IMR-90 (cell line): ENCODE measurements at regions of chr5 and their contacts with region 1.

Region 1: DNA sequence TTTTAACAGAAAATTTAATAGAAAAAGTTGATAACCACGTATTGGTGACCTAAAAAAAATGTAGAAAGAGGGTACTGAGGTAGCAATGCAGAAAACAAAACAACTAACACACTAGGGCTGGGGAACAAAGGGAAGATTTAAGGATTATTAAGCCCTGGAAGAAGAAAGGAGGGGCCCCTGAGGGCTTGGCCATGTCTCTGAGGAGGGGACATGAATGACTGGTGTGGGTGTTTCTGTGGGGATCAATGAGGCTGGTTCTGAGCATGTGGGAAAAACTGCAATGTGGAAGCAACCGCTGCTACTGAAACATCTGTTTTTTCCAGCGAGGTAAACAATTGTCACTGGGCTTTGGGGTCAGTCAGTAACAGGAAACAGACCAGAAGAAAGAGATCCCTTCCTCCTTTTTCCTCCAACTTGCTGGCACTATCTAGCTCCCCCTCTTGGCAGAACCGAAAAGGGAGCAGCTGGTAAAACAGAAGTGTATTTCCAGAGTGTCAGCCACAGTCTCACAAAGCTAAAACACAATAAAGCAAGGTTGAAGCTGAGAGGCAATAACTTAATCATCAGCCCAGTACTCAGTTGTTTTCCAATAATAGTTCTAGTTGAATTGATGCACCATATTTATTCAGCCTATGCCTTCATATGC is 48.3 kb downstream of the ATPSCKMT start:
- DNase-seq: peak; percentile 7
- ATAC-seq: no peak
- H3K4me3 ChIP-seq: no peak overlapping the region
- H3K27ac ChIP-seq: no peak overlapping the region
- H3K4me1 ChIP-seq: 0 out of 2 replicates have a peak, but pooled peaks cover 2% of the 10 kb centered on the region
- H3K27me3 ChIP-seq: no peaks in the 10 kb centered on the region
- CTCF ChIP-seq: peak; percentile 30; the same call in 1 of the 2 replicates
- POLR2A ChIP-seq: no peak
- RAD21 ChIP-seq: no peak

Region 2: DNA sequence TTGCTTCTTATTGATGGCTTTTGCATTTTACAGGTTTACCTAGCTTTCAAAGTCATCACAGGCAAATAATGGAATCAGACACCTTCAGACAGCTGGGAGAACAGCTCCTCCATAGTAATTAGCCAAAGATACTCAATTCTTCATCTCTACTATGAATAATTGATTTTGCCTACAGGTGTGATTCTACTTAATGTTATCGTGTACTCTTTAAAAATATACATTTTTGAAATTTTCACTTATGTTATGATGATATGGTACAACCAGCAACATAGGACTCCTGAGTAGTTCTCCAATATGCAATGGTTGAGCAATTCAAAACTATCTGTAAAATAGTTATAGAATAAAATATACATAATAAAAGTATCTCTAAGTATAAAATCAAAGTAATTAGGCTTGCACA is 571.1 kb before region 1 on chr5 and contains the start of gene TAS2R1:
- CTCF ChIA-PET with region 1: no interaction called
- POLR2A ChIA-PET with region 1: no interaction called
- dilution Hi-C with region 1: no loop called
- in situ Hi-C with region 1: no loop called
- intact Hi-C with region 1: loop called (anchors 2 kb)
- DNase-seq: no peak
- ATAC-seq: no peak
- H3K4me3 ChIP-seq: no peak within 1 kb of the TSS
- H3K27ac ChIP-seq: no peak within 1 kb of the TSS
- H3K4me1 ChIP-seq: no peaks in the 10 kb centered on the region
- H3K27me3 ChIP-seq: no peaks in the 10 kb centered on the region
- CTCF ChIP-seq: no peak
- POLR2A ChIP-seq: no peak
- RAD21 ChIP-seq: no peak
- total RNA-seq, gene TAS2R1: not detected in 2 replicates

Region 3: GRCh38 chr5:9888501-9888901 is 312.8 kb before region 1 on chr5:
- CTCF ChIA-PET with region 1: no interaction called
- POLR2A ChIA-PET with region 1: no interaction called
- dilution Hi-C with region 1: no loop called
- in situ Hi-C with region 1: no loop called
- intact Hi-C with region 1: no loop called
- DNase-seq: peak; percentile 96
- ATAC-seq: peak; percentile 100
- H3K4me3 ChIP-seq: no peak overlapping the region
- H3K27ac ChIP-seq: peak overlapping the region; percentile 44
- H3K4me1 ChIP-seq: peaks cover 15% of the 10 kb centered on the region
- H3K27me3 ChIP-seq: no peaks in the 10 kb centered on the region
- CTCF ChIP-seq: no peak
- POLR2A ChIP-seq: no peak
- RAD21 ChIP-seq: no peak; the same call in 1 of the 2 replicates

Region 4: DNA sequence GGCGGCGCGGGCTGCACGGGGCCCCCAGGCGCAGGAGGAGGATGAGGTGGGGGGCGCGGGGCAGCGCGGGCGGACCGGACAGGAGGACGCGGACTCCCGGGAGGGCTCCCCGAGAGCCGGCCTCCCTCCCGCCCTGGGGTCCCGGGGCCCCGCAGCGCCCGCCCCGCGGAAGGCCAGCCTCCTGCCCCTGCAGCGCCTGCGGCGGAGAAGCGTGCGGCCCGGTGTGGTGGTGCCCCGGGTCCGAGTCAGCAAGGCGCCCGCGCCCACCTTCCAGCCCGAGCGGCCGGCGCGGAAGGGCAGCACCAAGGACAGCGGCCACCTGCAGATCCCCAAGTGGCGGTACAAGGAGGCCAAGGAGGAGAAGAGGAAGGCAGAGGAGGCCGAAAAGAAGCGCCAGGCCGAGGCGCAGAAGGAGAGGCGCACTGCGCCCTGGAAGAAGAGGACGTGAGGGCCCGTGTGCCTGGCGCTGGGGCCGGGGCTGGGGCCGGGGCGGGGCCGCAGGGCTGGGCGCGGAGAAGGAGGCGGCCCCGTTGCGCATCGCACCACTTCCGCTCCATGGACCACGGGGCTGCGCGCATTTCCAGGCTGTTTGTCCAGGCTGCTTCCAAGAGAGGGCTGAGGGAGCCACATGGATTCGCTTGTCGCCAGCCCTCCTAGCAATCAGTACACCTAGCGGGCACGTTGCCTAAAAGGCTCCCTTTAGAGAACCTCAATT is 448.5 kb after region 1 on chr5:
- CTCF ChIA-PET with region 1: no interaction called
- POLR2A ChIA-PET with region 1: no interaction called
- dilution Hi-C with region 1: no loop called
- in situ Hi-C with region 1: no loop called
- intact Hi-C with region 1: no loop called
- DNase-seq: no peak
- ATAC-seq: no peak
- H3K4me3 ChIP-seq: no peak overlapping the region
- H3K27ac ChIP-seq: no peak overlapping the region
- H3K4me1 ChIP-seq: no peaks in the 10 kb centered on the region; the same call in 1 of the 2 replicates
- H3K27me3 ChIP-seq: no peaks in the 10 kb centered on the region
- CTCF ChIP-seq: no peak
- POLR2A ChIP-seq: no peak
- RAD21 ChIP-seq: no peak